ENCODE measurements at regions of chr22 and their contacts with region 1.

Region 1: GRCh38 chr22:35678836-35679235 is 30.6 kb downstream of the APOL6 start:
- DNase-seq: peak; percentile 16
- H3K4me3 Mint-ChIP-seq: no peak overlapping the region
- H3K27ac Mint-ChIP-seq: peak overlapping the region; percentile 80
- H3K4me1 Mint-ChIP-seq: peaks cover 26% of the 10 kb centered on the region
- H3K27me3 Mint-ChIP-seq: no peaks in the 10 kb centered on the region

Region 2: DNA sequence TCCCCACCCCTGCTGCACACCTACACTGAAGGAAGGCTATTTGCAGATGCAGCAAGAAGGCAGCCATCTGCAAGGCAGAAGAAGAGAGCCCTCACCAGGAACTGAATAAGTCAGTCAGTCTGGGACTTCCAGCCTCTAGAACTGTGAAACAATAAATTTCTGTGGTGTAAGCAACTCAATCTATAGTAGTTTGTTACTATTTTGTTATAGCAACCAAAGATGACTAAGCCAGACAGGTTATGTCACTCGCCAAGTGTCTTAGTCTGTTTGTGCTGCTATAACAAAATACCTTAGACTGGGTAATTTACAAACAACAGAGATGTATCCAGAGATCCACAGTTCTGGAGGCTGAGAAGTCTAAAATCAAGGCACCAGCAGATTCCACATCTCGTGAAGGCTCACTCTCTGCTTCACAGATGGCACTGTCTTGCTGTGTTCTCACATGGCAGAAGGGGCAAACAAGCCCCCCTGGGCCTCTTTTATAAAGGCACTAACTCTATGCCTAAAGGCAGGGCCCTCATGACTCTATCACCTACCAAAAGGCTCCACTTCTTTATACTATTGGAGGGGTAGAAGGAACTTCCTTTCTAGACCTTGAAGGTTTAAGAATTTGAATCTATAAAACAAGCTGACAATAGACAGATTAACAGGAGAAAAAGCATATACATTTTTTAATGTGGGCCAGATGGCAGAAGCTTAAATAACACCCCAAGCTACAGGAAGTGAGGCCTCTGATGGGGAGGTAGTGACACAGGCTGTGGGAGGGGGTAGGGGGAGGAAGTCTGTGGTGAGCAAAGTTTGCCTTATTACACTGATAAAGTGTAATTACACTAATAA is 18.3 kb before region 1 on chr22:
- CTCF ChIA-PET with region 1: interaction called, 3 read pairs
- intact Hi-C with region 1: loop called (anchors 1 kb)
- DNase-seq: peak; percentile 78
- H3K4me3 Mint-ChIP-seq: peak overlapping the region; percentile 32
- H3K27ac Mint-ChIP-seq: peak overlapping the region; percentile 94
- H3K4me1 Mint-ChIP-seq: peaks cover 70% of the 10 kb centered on the region
- H3K27me3 Mint-ChIP-seq: no peaks in the 10 kb centered on the region

Region 3: DNA sequence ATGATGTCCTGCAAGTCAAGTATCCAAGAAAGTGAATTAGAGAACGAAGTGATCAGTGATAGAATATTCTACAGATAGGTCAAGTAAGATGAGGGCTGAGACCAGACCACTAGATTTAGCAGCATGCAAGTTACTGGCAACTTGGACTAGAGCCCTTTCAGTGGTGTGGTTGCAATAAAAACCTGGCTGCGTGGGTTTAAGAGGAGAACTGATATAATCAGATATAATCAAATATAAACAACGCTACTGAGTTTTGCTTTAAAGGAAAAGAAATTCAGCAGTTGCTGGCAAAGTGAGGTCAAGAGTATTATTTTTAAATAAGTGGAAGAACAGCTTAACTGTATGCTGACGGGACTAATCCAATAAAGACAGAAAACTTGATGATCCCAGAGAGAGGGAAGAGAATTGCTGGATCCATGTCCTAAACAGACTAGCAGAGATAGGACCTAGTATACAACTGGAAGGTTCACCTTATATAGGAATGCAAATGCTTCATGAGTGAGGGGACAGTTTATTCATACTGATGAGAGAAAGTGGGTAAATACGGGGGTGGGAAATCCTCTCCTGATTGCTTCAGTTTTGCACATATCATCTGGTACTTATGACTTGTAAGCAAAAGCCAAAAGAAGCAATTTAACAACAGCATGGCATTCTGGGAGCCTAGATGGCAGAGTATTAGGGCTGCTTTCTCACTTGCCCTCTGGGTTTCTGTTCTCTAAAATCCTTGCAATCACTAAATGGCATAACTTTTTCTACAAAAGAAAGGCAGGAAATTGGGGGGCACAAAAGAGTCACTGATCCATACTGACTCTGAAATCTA is 203.6 kb after region 1 on chr22:
- CTCF ChIA-PET with region 1: no interaction called
- intact Hi-C with region 1: no loop called
- DNase-seq: no peak
- H3K4me3 Mint-ChIP-seq: no peak overlapping the region
- H3K27ac Mint-ChIP-seq: no peak overlapping the region
- H3K4me1 Mint-ChIP-seq: peaks cover 23% of the 10 kb centered on the region
- H3K27me3 Mint-ChIP-seq: no peaks in the 10 kb centered on the region

Measured in activated naive CD4-positive, alpha-beta T cell treated with anti-CD3 and anti-CD28 coated beads for 36 hours (primary cell).